OCI-LY7 (cell line): ENCODE measurements at regions of chrX and their contacts with region 1.

Region 1: GRCh38 chrX:79081895-79082512 is 62.5 kb upstream of the GPR174 start:
- DNase-seq: peak; percentile 58
- H3K4me3 ChIP-seq: no peak overlapping the region
- H3K27ac ChIP-seq: no peak overlapping the region
- H3K4me1 ChIP-seq: peaks cover 5% of the 10 kb centered on the region
- CTCF ChIP-seq: peak; percentile 79

Region 2: DNA sequence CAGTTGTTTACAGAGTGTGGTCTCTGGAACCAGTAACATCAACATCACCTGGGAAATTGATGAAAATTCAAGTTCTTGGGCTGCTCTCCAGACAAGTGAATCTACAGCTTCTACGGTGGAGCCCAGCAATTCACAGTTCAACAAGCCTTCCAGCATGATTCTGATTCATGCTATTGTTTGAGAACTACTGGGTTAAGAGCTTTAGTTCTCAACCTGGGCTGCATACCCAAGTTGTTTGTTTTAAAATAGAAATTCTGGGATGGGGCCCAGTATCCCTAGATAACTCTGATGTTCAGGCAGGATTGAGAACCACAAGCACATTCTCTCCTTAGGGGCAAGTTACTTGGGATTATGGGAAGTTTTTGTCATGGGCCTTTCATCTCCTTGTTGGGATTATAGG is 1015.9 kb before region 1 on chrX:
- CTCF ChIA-PET with region 1: no interaction called
- POLR2A ChIA-PET with region 1: no interaction called
- intact Hi-C with region 1: no loop called
- DNase-seq: no peak
- H3K4me3 ChIP-seq: no peak overlapping the region
- H3K27ac ChIP-seq: no peak overlapping the region
- H3K4me1 ChIP-seq: no peaks in the 10 kb centered on the region
- CTCF ChIP-seq: no peak

Region 3: DNA sequence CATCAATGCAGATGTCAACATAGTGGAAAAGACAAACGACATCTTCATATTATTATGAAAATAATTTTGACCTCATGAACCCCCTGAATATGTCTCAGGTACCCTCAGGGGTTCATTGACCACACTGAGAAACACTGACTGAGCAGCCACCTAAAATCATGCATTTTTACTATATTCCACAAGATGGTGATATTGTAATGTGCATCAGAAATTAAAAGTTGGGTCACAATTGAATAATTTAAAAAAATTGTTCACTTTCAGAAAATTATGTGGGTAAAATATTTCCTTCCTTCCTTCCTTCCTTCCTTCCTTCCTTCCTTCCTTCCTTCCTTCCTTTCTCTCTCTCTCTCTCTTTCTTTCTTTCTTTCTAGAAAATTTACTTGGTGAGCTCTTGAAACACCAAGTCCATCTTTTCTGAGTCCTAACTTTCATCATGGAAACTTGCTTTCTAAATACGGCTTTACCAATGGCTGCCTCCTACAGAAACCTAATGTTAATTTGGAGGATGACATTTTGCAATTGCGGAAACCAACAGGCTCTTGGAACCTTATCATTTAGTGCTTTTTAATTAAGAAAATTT is 526.5 kb before region 1 on chrX:
- CTCF ChIA-PET with region 1: no interaction called
- POLR2A ChIA-PET with region 1: no interaction called
- intact Hi-C with region 1: loop called (anchors 5 kb)
- DNase-seq: peak; percentile 2
- H3K4me3 ChIP-seq: no peak overlapping the region
- H3K27ac ChIP-seq: no peak overlapping the region
- H3K4me1 ChIP-seq: no peaks in the 10 kb centered on the region
- CTCF ChIP-seq: peak; percentile 62

Region 4: DNA sequence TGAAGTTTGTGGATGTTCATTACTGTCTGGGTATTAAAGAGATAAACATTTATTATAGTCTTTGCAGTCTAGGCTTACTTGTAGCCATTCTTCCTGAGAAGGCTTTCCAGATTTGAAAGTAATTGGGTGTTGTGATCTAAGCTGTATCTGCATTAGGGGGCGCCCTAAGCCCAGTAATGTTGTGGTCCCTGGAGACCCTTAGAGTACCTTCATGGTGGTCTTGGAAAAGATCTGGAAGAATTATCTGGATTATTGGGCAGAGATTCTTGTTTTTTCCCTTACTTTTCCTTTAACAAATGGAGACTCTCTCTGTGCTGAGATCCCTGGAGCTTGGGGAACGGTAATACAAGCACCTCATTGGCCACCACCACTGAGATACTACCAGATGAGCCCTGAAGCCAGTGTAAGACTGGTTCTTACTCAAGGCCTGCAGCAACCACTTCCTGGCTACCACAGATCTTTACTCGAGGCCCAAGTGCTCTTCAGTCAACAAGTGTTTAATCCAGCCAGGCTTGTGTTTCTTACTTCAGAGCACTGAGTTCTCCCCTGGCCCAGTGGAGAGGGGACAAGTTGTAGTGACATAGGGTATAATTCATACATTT is 486.0 kb before region 1 on chrX:
- CTCF ChIA-PET with region 1: no interaction called
- POLR2A ChIA-PET with region 1: no interaction called
- intact Hi-C with region 1: loop called (anchors 5 kb)
- DNase-seq: peak; percentile 13
- H3K4me3 ChIP-seq: no peak overlapping the region
- H3K27ac ChIP-seq: no peak overlapping the region
- H3K4me1 ChIP-seq: no peaks in the 10 kb centered on the region
- CTCF ChIP-seq: peak; percentile 67

Region 5: GRCh38 chrX:78754917-78755316 is 327.1 kb before region 1 on chrX:
- CTCF ChIA-PET with region 1: no interaction called
- POLR2A ChIA-PET with region 1: no interaction called
- intact Hi-C with region 1: loop called (anchors 10 kb)
- DNase-seq: peak; percentile 74
- H3K4me3 ChIP-seq: peak overlapping the region; percentile 34
- H3K27ac ChIP-seq: peak overlapping the region; percentile 50
- H3K4me1 ChIP-seq: peaks cover 36% of the 10 kb centered on the region
- CTCF ChIP-seq: peak; percentile 63

Region 6: DNA sequence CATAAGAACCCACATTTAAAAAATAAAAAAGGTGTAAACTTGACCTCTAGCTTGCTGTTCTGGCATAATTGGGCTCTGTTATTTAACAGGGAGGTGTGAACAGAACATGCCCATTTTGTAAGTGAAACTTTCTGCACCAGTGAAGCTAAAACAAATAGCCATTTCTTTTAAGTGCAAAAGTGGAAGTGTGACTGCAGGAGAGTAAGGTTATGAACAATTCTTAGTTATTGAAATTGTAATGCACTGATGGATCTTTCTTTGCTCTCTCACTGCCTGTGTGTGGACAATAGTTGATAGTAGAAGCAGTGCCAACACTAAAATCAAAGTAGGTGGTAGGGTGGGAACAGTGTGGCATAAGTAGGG is 124.3 kb before region 1 on chrX:
- CTCF ChIA-PET with region 1: no interaction called
- POLR2A ChIA-PET with region 1: no interaction called
- intact Hi-C with region 1: no loop called
- DNase-seq: peak; percentile 28
- H3K4me3 ChIP-seq: peak overlapping the region; percentile 17
- H3K27ac ChIP-seq: peak overlapping the region; percentile 49
- H3K4me1 ChIP-seq: peaks cover 25% of the 10 kb centered on the region
- CTCF ChIP-seq: no peak

Region 7: GRCh38 chrX:79412972-79413371 is 331.0 kb after region 1 on chrX:
- CTCF ChIA-PET with region 1: no interaction called
- POLR2A ChIA-PET with region 1: no interaction called
- intact Hi-C with region 1: loop called (anchors 10 kb)
- DNase-seq: peak; percentile 5
- H3K4me3 ChIP-seq: no peak overlapping the region
- H3K27ac ChIP-seq: no peak overlapping the region
- H3K4me1 ChIP-seq: no peaks in the 10 kb centered on the region
- CTCF ChIP-seq: peak; percentile 68